ENCODE measurements at regions of chr12 and their contacts with region 1.

Region 1: DNA sequence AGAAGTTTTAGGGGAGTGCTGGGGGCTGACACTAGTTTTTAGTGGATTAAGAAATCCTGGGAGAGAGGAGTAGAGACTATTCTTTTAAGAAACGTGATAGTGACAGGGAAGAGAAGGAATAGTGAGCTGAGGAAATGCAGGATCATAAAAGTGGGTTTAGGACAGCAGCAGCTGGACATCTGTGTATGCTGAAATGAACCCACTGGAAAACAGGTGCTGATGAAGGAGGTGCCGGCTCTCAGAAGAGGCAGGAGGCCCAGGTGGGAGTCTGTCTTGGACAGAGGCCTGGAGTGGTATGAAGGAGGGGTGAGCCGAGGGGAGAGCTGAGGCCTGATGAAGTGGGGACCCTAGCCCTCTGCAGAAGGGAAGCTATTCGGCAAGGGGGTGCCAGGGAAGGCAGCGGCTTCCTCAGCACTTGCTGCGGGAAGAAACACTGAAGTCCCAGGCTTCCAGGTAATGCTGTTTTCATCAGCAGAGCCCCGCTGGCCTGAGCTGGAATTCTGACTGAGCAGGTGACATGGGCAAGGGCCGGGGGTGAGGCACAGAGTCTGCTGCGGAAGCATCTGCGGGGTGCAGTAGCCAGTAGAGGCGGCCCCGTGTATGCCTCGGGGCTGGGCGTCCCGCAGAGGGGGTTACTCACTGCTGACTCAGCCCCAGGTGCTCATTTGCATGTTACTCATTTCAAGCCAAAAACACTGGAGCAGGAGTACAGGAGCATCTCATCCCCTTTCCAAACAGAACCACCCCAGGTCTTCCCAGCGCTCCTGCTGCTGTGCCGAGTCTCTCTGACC is 89.7 kb downstream of the TMCC3 start:
- DNase-seq: peak; percentile 62
- H3K4me3 ChIP-seq: peak overlapping the region; percentile 26
- H3K27ac ChIP-seq: no peak overlapping the region
- H3K4me1 ChIP-seq: peaks cover 21% of the 10 kb centered on the region
- CTCF ChIP-seq: no peak

Region 2: GRCh38 chr12:94750864-94751263 is 190.2 kb after region 1 on chr12:
- CTCF ChIA-PET with region 1: no interaction called
- POLR2A ChIA-PET with region 1: interaction called, 10 read pairs
- intact Hi-C with region 1: no loop called
- DNase-seq: no peak
- H3K4me3 ChIP-seq: no peak overlapping the region
- H3K27ac ChIP-seq: no peak overlapping the region
- H3K4me1 ChIP-seq: no peaks in the 10 kb centered on the region
- CTCF ChIP-seq: no peak